Heart left ventricle (tissue), 16 donors: ENCODE measurements at regions of chr3 and their contacts with region 1.

Region 1: GRCh38 chr3:168511428-168512014 is 415.8 kb upstream of the GOLIM4 start:
- DNase-seq: no peak
- ATAC-seq: no peak
- H3K4me3 ChIP-seq: no peak overlapping the region
- H3K27ac ChIP-seq: no peak overlapping the region
- H3K4me1 ChIP-seq: no peaks in the 10 kb centered on the region
- H3K27me3 ChIP-seq: peaks cover 0 to 7% (median 0%) of the 10 kb centered on the region in 9 donors
- CTCF ChIP-seq: peak; percentile 31 to 62 (median 50)
- POLR2A ChIP-seq: no peak

Region 2: DNA sequence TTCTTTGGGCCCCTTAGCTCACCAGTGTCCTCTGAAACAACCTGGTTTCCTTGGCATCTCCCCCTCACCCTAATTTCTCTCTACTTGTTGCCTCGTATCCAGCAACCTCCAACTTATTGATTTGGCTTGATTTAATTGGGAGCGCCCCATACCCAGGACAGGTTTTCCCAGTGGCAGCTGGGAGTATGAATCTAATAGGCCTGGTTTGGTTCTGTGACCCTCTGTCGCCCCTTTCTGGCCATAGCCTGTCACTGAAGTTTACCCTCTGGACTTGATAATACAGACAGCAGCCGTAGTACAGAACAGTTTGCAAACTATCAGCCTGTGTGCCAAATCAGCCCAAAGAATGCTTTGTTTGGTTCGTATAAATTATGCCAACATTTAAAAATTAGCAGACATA is 109.3 kb after region 1 on chr3:
- intact Hi-C with region 1: loop called in 3 of 10 experiments (anchors 5 to 10 kb)
- DNase-seq: no peak
- ATAC-seq: no peak
- H3K4me3 ChIP-seq: no peak overlapping the region
- H3K27ac ChIP-seq: no peak overlapping the region
- H3K4me1 ChIP-seq: no peaks in the 10 kb centered on the region
- H3K27me3 ChIP-seq: no peaks in the 10 kb centered on the region
- CTCF ChIP-seq: peak in 11 of 12 donors; percentile 7 to 48 (median 19)
- POLR2A ChIP-seq: no peak